ENCODE measurements at regions of chr5 and their contacts with region 1.

Region 1: DNA sequence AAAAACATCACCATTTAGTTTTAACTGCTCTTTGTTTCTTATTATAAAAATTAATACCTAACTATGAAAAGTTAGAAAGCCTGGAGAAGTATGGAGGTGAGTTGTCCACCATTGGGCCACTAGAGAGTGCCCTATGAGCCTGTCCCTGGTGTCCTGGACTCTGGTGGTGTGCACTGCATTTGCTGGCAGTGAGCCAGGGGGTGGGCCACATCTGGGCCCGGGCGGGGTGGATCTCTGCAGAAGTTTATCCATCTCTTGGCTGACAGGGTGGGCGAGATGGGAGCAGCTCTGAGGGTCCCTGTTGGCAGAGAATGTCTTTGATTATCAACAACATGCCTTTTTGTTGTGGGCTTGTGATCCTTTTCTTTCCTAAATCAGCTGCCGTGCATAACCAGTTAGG is 8.2 kb downstream of the TENT4A start:
- DNase-seq: no peak
- ATAC-seq: no peak
- H3K4me3 ChIP-seq: peak overlapping the region in 1 of 4 donors; percentile 29
- H3K27ac ChIP-seq: peak overlapping the region; percentile 11 to 55 (median 40)
- H3K4me1 ChIP-seq: peaks cover 82 to 92% of the 10 kb centered on the region in 2 donors
- H3K27me3 ChIP-seq: no peaks in the 10 kb centered on the region
- CTCF ChIP-seq: no peak
- POLR2A ChIP-seq: no peak

Region 2: GRCh38 chr5:6753851-6754250 is 32.4 kb after region 1 on chr5:
- in situ Hi-C with region 1: no loop called
- intact Hi-C with region 1: loop called (anchors 1 kb)
- DNase-seq: peak in 1 of 2 donors; percentile 64
- ATAC-seq: peak in 1 of 2 donors; percentile 81
- H3K4me3 ChIP-seq: no peak overlapping the region
- H3K27ac ChIP-seq: peak overlapping the region in 1 of 4 donors; percentile 18
- H3K4me1 ChIP-seq: peaks cover 0 to 4% of the 10 kb centered on the region in 2 donors
- H3K27me3 ChIP-seq: no peaks in the 10 kb centered on the region
- CTCF ChIP-seq: no peak
- POLR2A ChIP-seq: no peak

Region 3: GRCh38 chr5:6950860-6951259 is 229.4 kb after region 1 on chr5:
- in situ Hi-C with region 1: no loop called
- intact Hi-C with region 1: no loop called
- DNase-seq: no peak
- ATAC-seq: no peak
- H3K4me3 ChIP-seq: no peak overlapping the region
- H3K27ac ChIP-seq: no peak overlapping the region
- H3K4me1 ChIP-seq: no peaks in the 10 kb centered on the region
- H3K27me3 ChIP-seq: no peaks in the 10 kb centered on the region
- CTCF ChIP-seq: no peak
- POLR2A ChIP-seq: no peak

Measured in gastrocnemius medialis (tissue), 4 donors.